ENCODE measurements at regions of chr1 and their contacts with region 1.

Region 1: DNA sequence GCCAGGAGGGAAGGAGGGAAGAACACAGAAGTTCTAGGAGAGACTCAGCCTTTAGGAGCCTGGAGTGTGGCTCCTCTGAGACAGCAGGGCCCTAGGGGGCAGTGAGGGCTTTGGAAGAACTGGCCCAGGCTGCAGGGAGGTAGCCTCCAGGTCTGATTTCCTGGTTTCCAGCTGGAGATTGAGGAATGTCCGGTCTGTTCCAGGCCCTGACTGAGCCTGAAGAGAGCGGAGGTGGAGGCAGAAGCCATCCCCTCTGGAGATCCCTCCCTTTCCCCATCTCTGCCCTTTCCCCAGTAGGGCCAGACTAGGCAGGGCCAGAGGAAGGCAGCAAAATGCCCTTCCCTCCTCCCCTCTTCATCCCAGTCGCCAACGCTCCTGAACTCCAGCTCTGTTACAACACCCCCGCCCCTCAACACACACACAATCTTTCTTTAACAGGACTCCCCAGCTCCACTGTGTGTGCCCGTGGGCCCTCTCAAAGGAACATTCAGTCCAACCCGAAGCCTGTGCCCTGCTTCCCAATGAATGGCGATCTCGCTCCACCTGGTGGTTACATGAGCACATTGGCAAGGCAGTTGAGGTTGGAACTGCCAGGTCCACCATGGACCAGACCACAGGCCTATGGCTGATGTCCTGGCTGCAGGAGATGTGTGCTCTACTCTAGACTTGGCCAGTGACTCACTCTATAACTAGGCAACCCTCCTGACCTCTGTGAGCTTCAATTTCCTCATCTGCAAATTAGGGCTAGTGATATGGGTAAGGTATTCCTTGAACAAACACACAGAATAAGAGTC is 32.0 kb downstream of the MAP7D1 start:
- DNase-seq: peak; percentile 57
- ATAC-seq: peak; percentile 100
- H3K4me3 ChIP-seq: no peak overlapping the region
- H3K27ac ChIP-seq: no peak overlapping the region
- H3K4me1 ChIP-seq: peaks cover 4% of the 10 kb centered on the region; the same call in 1 of the 2 replicates
- H3K27me3 ChIP-seq: no peaks in the 10 kb centered on the region
- CTCF ChIP-seq: peak; percentile 88 to 99 (median 93); a peak in 5 of 6 replicates
- EP300 ChIP-seq: no peak
- POLR2A ChIP-seq: no peak
- RAD21 ChIP-seq: peak; percentile 98

Region 2: GRCh38 chr1:36088575-36089443 is 99.2 kb before region 1 on chr1 and contains the start of gene ADPRS:
- CTCF ChIA-PET with region 1: interaction called, 3 read pairs
- POLR2A ChIA-PET with region 1: no interaction called
- RAD21 ChIA-PET with region 1: interaction called, 5 read pairs
- SMC1A ChIA-PET with region 1: no interaction called
- in situ Hi-C with region 1: loop called (anchors 5 kb)
- intact Hi-C with region 1: no loop called
- DNase-seq: peak; percentile 52
- ATAC-seq: peak; percentile 92
- H3K4me3 ChIP-seq: peak within 1 kb of the TSS; percentile 98
- H3K27ac ChIP-seq: peak within 1 kb of the TSS; percentile 82
- H3K4me1 ChIP-seq: no peaks in the 10 kb centered on the region; the same call in 1 of the 2 replicates
- H3K27me3 ChIP-seq: no peaks in the 10 kb centered on the region; a peak in 1 of 4 replicates
- CTCF ChIP-seq: peak; percentile 97 to 99 (median 98)
- EP300 ChIP-seq: no peak; a peak in 1 of 4 replicates
- POLR2A ChIP-seq: peak; percentile 99
- RAD21 ChIP-seq: peak; percentile 34; the same call in 1 of the 2 replicates
- polyA plus RNA-seq, gene ADPRS: 7.6 to 12.1 TPM

Region 3: DNA sequence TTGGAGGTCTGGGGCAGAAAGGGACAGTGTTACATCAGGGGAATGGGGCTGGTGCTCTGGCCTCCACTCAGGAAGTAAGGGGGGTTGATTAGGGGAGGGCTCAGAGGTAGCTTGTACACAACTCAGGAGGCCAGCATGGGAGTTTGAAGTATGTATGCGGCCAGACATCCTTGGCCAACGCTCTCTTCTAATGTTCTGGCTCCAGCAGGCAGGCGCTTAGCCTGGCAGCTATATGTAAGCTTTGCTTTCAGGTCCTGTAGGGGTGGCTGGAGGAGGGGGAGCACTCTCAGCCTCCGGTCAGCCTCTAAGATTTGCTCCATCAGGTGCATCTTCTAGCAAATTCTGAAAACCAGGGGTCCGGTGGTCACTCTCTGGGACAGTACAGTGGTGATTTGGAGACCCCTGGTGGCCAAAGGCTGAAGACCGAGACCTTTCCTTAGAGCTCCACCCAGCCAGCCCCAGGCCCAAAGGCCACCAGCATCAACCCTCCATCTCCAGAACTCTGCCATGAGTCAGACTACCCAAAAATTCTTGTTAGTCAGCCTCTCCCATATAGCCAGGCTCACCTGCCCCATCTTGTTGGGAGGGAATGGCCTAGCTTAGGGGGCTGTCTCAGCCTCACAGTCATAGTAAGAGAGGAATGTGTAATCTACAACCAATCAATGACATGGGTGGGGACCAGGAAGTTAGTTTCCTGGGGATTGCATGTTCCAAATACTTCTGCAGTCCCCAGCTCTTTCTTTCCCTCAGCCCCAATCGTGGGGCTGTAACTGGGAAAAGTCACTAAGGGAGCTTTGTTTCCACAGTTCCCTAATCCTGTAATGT is 53.3 kb before region 1 on chr1:
- CTCF ChIA-PET with region 1: interaction called, 7 read pairs
- POLR2A ChIA-PET with region 1: no interaction called
- RAD21 ChIA-PET with region 1: interaction called, 15 read pairs
- SMC1A ChIA-PET with region 1: interaction called, 5 read pairs
- in situ Hi-C with region 1: no loop called
- intact Hi-C with region 1: no loop called
- DNase-seq: no peak
- ATAC-seq: peak; percentile 96
- H3K4me3 ChIP-seq: no peak overlapping the region
- H3K27ac ChIP-seq: no peak overlapping the region
- H3K4me1 ChIP-seq: no peaks in the 10 kb centered on the region
- H3K27me3 ChIP-seq: no peaks in the 10 kb centered on the region
- CTCF ChIP-seq: peak; percentile 62 to 70 (median 69)
- EP300 ChIP-seq: no peak
- POLR2A ChIP-seq: no peak
- RAD21 ChIP-seq: peak; percentile 73

Region 4: GRCh38 chr1:36155408-36156328 is 32.3 kb before region 1 on chr1 and contains the start of gene MAP7D1:
- CTCF ChIA-PET with region 1: interaction called, 262 read pairs
- POLR2A ChIA-PET with region 1: interaction called, 49 read pairs
- RAD21 ChIA-PET with region 1: interaction called, 147 read pairs
- SMC1A ChIA-PET with region 1: interaction called, 126 read pairs
- in situ Hi-C with region 1: no loop called
- intact Hi-C with region 1: no loop called
- DNase-seq: no peak
- ATAC-seq: peak; percentile 53
- H3K4me3 ChIP-seq: peak within 1 kb of the TSS; percentile 99
- H3K27ac ChIP-seq: peak within 1 kb of the TSS; percentile 85
- H3K4me1 ChIP-seq: peaks cover 47% of the 10 kb centered on the region
- H3K27me3 ChIP-seq: no peaks in the 10 kb centered on the region
- CTCF ChIP-seq: no peak
- EP300 ChIP-seq: no peak
- POLR2A ChIP-seq: peak; percentile 93
- RAD21 ChIP-seq: no peak
- polyA plus RNA-seq, gene MAP7D1: 4.4 to 11.2 TPM

Region 5: DNA sequence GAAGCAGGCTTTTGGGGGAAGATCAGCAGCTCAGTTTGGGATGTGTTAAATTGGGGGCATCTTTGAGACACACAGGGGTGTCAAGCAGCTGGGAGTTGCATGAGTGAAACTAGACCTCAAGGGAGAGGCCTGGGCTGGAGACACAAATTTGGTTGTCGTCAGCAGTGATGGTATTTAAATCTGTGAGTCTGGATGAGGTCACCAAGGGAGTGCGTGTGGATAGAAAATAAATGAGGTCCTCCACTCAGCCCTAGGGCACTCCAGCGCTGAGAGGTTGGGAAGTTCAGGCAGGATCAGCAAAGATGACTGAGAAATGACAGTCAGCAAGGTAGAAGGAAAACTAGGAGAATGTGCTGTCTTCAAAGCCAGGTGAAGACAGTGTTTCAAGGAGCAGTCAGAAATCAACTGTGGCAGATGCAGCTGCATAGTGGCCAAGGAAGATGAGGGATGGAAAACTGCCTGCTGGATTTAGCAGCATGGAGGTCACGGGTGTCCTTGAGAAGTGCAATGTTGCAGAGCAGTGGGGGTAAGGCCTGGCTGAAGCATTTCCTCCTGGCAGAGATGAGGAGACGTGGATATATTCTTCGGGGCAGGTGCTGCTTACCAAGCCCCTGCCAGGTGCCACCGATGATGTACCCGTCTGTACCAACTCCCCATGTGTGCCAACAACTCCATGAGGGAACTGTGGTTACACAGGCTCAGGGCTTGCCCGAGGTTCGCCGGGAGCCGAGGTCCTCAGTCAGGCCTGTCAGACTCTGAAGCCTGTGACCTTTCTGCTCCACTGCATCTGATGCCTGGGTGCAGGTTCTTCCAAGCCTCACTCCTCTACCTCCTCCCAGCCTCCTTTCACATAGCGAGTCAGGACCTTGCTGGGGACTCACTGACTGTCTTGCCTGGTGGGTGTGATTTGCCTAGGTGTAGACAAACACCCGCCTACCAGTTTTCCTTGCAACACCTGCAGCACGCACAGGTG is 20.8 kb before region 1 on chr1:
- CTCF ChIA-PET with region 1: interaction called, 68 read pairs
- POLR2A ChIA-PET with region 1: interaction called, 12 read pairs
- RAD21 ChIA-PET with region 1: interaction called, 33 read pairs
- SMC1A ChIA-PET with region 1: interaction called, 67 read pairs
- in situ Hi-C with region 1: no loop called
- intact Hi-C with region 1: no loop called
- DNase-seq: no peak
- ATAC-seq: no peak
- H3K4me3 ChIP-seq: no peak overlapping the region
- H3K27ac ChIP-seq: no peak overlapping the region
- H3K4me1 ChIP-seq: peaks cover 17% of the 10 kb centered on the region
- H3K27me3 ChIP-seq: no peaks in the 10 kb centered on the region
- CTCF ChIP-seq: no peak
- EP300 ChIP-seq: no peak
- POLR2A ChIP-seq: no peak
- RAD21 ChIP-seq: no peak

Region 6: GRCh38 chr1:36285448-36286101 is 97.6 kb after region 1 on chr1:
- CTCF ChIA-PET with region 1: interaction called, 51 read pairs
- POLR2A ChIA-PET with region 1: no interaction called
- RAD21 ChIA-PET with region 1: interaction called, 23 read pairs
- SMC1A ChIA-PET with region 1: interaction called, 32 read pairs
- in situ Hi-C with region 1: no loop called
- intact Hi-C with region 1: loop called (anchors 5 kb)
- DNase-seq: peak; percentile 41
- ATAC-seq: peak; percentile 96
- H3K4me3 ChIP-seq: no peak overlapping the region
- H3K27ac ChIP-seq: no peak overlapping the region
- H3K4me1 ChIP-seq: no peaks in the 10 kb centered on the region; the same call in 1 of the 2 replicates
- H3K27me3 ChIP-seq: no peaks in the 10 kb centered on the region
- CTCF ChIP-seq: peak; percentile 56 to 78 (median 67)
- EP300 ChIP-seq: no peak
- POLR2A ChIP-seq: no peak
- RAD21 ChIP-seq: peak; percentile 84

Region 7: GRCh38 chr1:36471830-36472641 is 284.0 kb after region 1 on chr1:
- CTCF ChIA-PET with region 1: no interaction called
- POLR2A ChIA-PET with region 1: no interaction called
- RAD21 ChIA-PET with region 1: no interaction called
- SMC1A ChIA-PET with region 1: no interaction called
- in situ Hi-C with region 1: no loop called
- intact Hi-C with region 1: no loop called
- DNase-seq: no peak
- ATAC-seq: 0 out of 3 replicates have a peak, but pooled peaks have one; percentile 8
- H3K4me3 ChIP-seq: no peak overlapping the region
- H3K27ac ChIP-seq: no peak overlapping the region
- H3K4me1 ChIP-seq: peaks cover 16% of the 10 kb centered on the region
- H3K27me3 ChIP-seq: no peaks in the 10 kb centered on the region
- CTCF ChIP-seq: no peak
- EP300 ChIP-seq: no peak
- POLR2A ChIP-seq: no peak
- RAD21 ChIP-seq: no peak

Region 8: DNA sequence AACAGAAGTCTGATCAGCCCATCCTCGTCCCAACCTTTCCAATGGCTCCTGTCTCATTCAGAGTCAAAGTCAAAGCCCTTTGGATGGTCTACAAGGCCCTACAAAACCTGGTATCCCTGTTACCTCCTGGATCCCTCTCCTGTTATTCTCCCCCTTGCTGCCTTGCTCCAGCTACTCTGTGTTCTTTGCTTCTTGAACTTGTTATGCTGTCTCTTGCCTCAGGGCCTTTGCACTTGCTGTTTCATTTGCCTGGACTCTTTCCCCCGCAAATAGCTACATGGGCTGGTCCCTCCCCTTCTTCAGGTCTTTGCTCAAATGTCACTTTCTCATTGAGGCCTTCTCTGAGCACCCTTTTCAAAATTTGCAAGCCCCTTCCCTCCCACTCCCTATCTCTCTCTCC is 296.1 kb after region 1 on chr1:
- CTCF ChIA-PET with region 1: no interaction called
- POLR2A ChIA-PET with region 1: no interaction called
- RAD21 ChIA-PET with region 1: no interaction called
- SMC1A ChIA-PET with region 1: no interaction called
- in situ Hi-C with region 1: no loop called
- intact Hi-C with region 1: no loop called
- DNase-seq: no peak
- ATAC-seq: no peak
- H3K4me3 ChIP-seq: no peak overlapping the region
- H3K27ac ChIP-seq: no peak overlapping the region
- H3K4me1 ChIP-seq: peaks cover 6% of the 10 kb centered on the region; the same call in 1 of the 2 replicates
- H3K27me3 ChIP-seq: peaks cover 0 to 3% of the 10 kb centered on the region in 2 experiments; a peak in 3 of 4 replicates
- CTCF ChIP-seq: no peak
- EP300 ChIP-seq: no peak
- POLR2A ChIP-seq: no peak
- RAD21 ChIP-seq: no peak

Region 9: DNA sequence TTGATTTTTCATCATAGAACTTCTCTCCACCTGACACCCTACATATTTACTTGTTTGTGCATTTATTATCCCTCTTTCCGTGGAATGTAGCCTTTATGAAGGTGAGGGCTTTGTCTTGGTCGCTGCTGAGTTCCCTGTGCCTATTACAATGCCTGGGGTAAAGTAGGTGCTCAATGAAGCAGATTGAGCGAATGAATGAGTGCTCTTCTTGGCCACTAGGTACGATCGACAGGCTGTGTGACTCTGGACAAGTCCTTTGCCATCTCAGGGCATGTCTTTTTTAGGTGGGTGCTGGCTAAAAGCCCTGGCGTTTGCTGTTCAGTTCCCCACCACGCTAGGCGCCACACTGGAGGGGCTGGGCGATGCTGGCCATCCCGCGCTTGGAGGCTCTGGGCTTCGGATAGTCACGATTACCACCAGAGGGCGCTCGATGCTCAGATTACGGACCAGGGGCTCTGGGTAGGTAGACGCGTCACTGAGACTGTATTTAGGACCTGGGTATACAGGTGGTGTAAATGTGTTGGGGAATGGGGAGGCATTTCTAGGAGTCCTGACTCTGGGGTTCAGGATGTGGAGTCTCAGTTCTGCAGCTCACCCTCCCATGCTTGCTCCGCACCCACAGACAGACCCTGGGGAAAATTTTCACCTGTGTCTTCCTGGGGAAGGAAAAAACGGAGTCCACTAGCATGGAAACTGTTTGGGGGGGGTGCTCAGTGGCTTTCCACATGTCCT is 365.8 kb after region 1 on chr1:
- CTCF ChIA-PET with region 1: no interaction called
- POLR2A ChIA-PET with region 1: no interaction called
- RAD21 ChIA-PET with region 1: no interaction called
- SMC1A ChIA-PET with region 1: no interaction called
- in situ Hi-C with region 1: no loop called
- intact Hi-C with region 1: no loop called
- DNase-seq: no peak
- ATAC-seq: peak; percentile 97
- H3K4me3 ChIP-seq: no peak overlapping the region
- H3K27ac ChIP-seq: no peak overlapping the region
- H3K4me1 ChIP-seq: no peaks in the 10 kb centered on the region
- H3K27me3 ChIP-seq: no peaks in the 10 kb centered on the region
- CTCF ChIP-seq: peak; percentile 75
- EP300 ChIP-seq: no peak
- POLR2A ChIP-seq: no peak
- RAD21 ChIP-seq: peak; percentile 61